OCI-LY7 (cell line): ENCODE measurements at regions of chr7 and their contacts with region 1.

Region 1: DNA sequence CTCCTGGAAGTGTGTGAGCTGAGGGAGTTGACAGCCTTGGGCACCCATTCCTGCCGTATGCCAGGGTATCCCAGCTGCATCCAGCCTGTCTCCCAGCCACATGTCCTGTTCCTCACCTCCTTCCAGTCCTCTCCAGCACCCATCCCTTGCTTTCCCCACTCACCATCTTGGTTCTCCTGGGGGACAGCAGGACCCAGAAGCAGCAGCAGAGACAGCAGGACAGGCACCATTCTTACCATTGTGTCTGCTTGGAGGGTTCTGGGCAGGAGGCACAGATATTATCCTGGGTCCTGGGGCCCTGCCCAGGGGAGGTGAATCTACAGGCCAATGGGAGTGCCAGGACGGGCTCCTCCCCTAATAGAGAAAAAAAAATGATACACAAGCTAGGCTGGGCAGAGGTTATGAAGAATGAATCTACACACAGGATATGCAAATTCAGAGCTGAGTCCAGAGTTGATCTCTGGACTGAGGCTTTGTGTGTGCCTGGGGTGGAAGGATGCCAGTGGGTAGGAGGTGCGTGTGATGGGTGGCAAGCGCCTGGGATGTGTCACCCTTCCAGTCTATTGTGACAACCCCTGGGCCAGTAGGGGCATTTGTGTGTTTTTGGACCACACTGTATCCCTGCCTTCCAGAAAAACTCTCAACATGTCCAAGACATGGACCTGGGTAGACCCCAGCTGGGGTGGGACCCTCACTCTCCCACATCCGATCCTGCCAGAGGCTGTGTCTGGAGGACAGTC is at the start of gene AZGP1:
- DNase-seq: peak; percentile 38
- H3K4me3 ChIP-seq: no peak within 1 kb of the TSS
- H3K27ac ChIP-seq: no peak within 1 kb of the TSS
- H3K4me1 ChIP-seq: peaks cover 21% of the 10 kb centered on the region
- CTCF ChIP-seq: no peak
- total RNA-seq, gene AZGP1: 0.60 and 2.1 TPM in 2 replicates

Region 2: DNA sequence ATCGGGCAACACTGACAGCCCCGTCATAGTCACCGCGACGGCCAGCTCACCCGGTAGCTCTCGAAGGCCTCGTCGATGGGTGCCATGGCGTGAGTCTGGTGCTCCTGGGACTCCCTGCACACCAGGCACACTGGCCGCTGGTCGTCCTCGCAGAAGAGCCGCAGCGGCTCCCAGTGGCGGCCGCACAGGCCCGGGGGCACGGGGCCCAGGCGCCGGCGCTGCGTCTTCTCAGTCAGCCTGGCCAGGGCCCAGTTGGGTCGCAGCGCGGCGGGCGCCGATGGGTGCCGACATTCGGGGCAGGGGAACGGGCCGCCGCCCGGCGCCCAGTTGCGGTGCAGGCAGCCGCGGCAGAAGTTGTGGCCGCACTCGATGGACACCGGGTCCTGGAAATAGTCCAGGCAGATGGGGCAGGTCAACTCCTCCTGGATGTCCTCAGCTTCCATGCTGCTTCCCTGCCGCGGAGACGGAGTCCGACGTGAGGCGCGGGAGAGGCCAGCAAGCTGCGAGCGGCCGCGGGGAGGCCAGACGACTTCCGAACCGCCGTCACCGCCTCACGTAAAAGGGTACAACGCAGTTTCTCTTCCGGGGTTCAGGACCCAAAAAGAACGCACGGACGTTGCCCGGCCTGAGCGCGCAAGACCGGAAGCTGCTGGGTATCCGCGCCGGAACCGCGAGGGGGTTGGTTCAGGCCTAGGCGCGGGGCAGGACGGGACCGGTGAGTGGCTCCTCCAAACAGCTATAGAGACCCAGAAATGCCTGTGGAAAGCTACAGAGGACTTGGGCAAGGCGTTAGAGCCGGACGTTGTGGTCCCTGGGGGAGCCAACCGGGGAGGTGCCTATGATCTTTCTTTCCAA is 56.8 kb before region 1 on chr7 and contains the start of gene TRIM4:
- CTCF ChIA-PET with region 1: no interaction called
- POLR2A ChIA-PET with region 1: no interaction called
- intact Hi-C with region 1: loop called (anchors 5 kb)
- DNase-seq: peak; percentile 93
- H3K4me3 ChIP-seq: peak within 1 kb of the TSS; percentile 96
- H3K27ac ChIP-seq: peak within 1 kb of the TSS; percentile 42
- H3K4me1 ChIP-seq: peaks cover 19% of the 10 kb centered on the region
- CTCF ChIP-seq: 0 out of 2 replicates have a peak, but pooled peaks have one; percentile 39
- total RNA-seq, gene TRIM4: 7.5 and 12.8 TPM in 2 replicates

Region 3: GRCh38 chr7:100015232-100016209 is 39.6 kb after region 1 on chr7 and contains the start of gene ZKSCAN1:
- CTCF ChIA-PET with region 1: no interaction called
- POLR2A ChIA-PET with region 1: no interaction called
- intact Hi-C with region 1: loop called (anchors 1 kb)
- DNase-seq: peak; percentile 95
- H3K4me3 ChIP-seq: peak within 1 kb of the TSS; percentile 100
- H3K27ac ChIP-seq: peak within 1 kb of the TSS; percentile 22
- H3K4me1 ChIP-seq: peaks cover 20% of the 10 kb centered on the region
- CTCF ChIP-seq: no peak
- total RNA-seq, gene ZKSCAN1: 20.2 and 21.4 TPM in 2 replicates